GM12878 (cell line): ENCODE measurements at regions of chr9 and their contacts with region 1.

Region 1: GRCh38 chr9:110048403-110048975 is 159.5 kb downstream of the C9orf152 start:
- DNase-seq: peak; percentile 56
- ATAC-seq: peak; percentile 90
- H3K4me3 ChIP-seq: peak overlapping the region; percentile 100
- H3K27ac ChIP-seq: peak overlapping the region; percentile 87
- H3K4me1 ChIP-seq: 0 out of 2 replicates have a peak, but pooled peaks cover 4% of the 10 kb centered on the region
- H3K27me3 ChIP-seq: no peaks in the 10 kb centered on the region; a peak in 1 of 4 replicates
- CTCF ChIP-seq: no peak
- EP300 ChIP-seq: no peak
- POLR2A ChIP-seq: peak; percentile 88
- RAD21 ChIP-seq: no peak

Region 2: GRCh38 chr9:108903420-108904103 is 1144.9 kb before region 1 on chr9:
- CTCF ChIA-PET with region 1: no interaction called
- POLR2A ChIA-PET with region 1: no interaction called
- RAD21 ChIA-PET with region 1: no interaction called
- SMC1A ChIA-PET with region 1: no interaction called
- in situ Hi-C with region 1: no loop called
- intact Hi-C with region 1: no loop called
- DNase-seq: no peak
- ATAC-seq: no peak
- H3K4me3 ChIP-seq: no peak overlapping the region
- H3K27ac ChIP-seq: no peak overlapping the region
- H3K4me1 ChIP-seq: no peaks in the 10 kb centered on the region
- H3K27me3 ChIP-seq: no peaks in the 10 kb centered on the region
- CTCF ChIP-seq: no peak
- EP300 ChIP-seq: no peak
- POLR2A ChIP-seq: no peak
- RAD21 ChIP-seq: no peak

Region 3: DNA sequence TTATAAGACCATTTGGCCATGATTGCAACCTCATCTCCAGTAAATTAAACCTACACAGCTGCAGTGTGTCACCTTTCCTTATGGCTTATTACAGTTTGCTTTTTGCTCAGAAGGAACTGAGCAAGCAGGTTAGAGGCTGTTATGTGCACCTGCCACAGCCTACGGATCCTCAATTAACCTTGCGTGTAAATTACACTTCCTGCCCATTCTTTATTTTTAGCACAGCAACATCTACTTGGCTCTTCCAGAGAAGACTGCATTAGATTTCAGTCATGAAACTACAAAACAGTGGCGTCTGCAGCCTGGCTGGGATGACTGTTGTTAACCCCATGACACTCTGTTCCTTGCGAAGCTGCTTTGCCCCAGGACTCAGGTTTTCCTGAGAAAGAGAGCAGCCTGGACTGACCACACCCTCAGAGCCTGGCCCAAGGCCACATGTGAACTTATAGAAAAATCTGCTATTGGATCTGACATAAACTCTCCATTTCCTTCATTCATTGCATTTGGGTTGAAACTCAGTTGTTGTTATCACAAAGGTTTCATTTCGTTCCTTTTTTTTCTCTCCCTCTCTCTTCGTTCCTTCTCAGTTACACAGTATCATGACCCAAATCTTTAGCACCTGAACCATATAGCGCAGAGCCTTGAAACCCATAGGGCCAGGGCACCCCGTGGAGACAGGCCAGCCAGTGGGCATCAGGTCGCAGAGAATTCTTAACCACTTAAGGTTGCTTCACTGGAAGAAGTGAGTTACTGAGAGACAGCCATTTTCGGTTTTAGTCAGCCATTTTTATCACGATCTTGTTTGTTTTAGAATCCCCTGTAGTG is 129.9 kb before region 1 on chr9:
- CTCF ChIA-PET with region 1: interaction called, 537 read pairs
- POLR2A ChIA-PET with region 1: interaction called, 17 read pairs
- RAD21 ChIA-PET with region 1: interaction called, 5 read pairs
- SMC1A ChIA-PET with region 1: interaction called, 636 read pairs
- in situ Hi-C with region 1: no loop called
- intact Hi-C with region 1: no loop called
- DNase-seq: peak; percentile 80
- ATAC-seq: peak; percentile 73
- H3K4me3 ChIP-seq: peak overlapping the region; percentile 37; the same call in 1 of the 2 replicates
- H3K27ac ChIP-seq: peak overlapping the region; percentile 94
- H3K4me1 ChIP-seq: peaks cover 55% of the 10 kb centered on the region
- H3K27me3 ChIP-seq: no peaks in the 10 kb centered on the region
- CTCF ChIP-seq: no peak
- EP300 ChIP-seq: peak; percentile 71 to 92
- POLR2A ChIP-seq: no peak; the same call in none of the 2 replicates
- RAD21 ChIP-seq: peak; percentile 38; the same call in 1 of the 2 replicates

Region 4: DNA sequence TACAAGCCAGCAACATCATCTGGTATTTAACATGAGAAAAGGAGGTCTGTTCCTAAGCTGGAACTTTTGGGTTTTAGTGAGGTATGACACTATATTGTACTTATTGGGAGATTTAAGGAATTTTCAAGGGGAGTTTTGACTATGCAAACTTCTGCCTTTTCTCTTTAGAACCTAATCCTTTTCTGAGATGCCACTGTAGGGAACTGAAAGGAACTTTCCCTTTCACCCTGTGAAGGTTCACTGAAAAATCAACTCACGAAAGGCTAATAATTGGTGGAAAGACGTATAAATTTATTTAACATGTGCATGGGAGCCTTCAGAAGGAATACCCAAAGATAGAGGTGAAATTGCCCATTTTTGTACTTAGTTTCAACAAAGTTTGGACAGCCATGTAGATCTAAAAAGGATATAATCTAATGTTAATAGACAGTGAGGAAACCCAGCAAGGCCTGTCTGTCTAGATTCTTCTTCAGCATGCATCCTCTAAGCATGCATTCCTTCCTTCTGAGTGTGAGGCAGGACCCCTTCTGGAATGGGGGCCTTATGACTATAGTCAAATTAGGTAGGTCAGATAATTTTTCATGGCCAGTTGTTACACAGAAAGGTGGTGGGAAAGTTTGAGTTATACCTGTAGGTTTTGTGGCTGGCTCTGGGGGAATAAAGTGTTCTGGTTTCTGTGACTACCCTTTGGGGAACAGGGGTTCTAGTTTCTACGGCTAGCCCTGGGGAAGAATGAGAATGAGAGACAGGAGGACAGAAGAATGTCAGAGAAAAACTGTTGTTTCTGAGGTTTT is 40.8 kb before region 1 on chr9:
- CTCF ChIA-PET with region 1: no interaction called
- POLR2A ChIA-PET with region 1: no interaction called
- RAD21 ChIA-PET with region 1: no interaction called
- SMC1A ChIA-PET with region 1: no interaction called
- in situ Hi-C with region 1: no loop called
- intact Hi-C with region 1: loop called (anchors 2 kb)
- DNase-seq: peak; percentile 59
- ATAC-seq: peak; percentile 86
- H3K4me3 ChIP-seq: no peak overlapping the region
- H3K27ac ChIP-seq: peak overlapping the region; percentile 69
- H3K4me1 ChIP-seq: peaks cover 21% of the 10 kb centered on the region
- H3K27me3 ChIP-seq: no peaks in the 10 kb centered on the region
- CTCF ChIP-seq: no peak
- EP300 ChIP-seq: no peak
- POLR2A ChIP-seq: no peak
- RAD21 ChIP-seq: peak; percentile 34; the same call in 1 of the 2 replicates

Region 5: GRCh38 chr9:110069326-110070248 is 21.1 kb after region 1 on chr9:
- CTCF ChIA-PET with region 1: interaction called, 3 read pairs
- POLR2A ChIA-PET with region 1: interaction called, 5 read pairs
- RAD21 ChIA-PET with region 1: interaction called, 11 read pairs
- SMC1A ChIA-PET with region 1: interaction called, 10 read pairs
- in situ Hi-C with region 1: no loop called
- intact Hi-C with region 1: no loop called
- DNase-seq: no peak
- ATAC-seq: no peak
- H3K4me3 ChIP-seq: no peak overlapping the region
- H3K27ac ChIP-seq: no peak overlapping the region
- H3K4me1 ChIP-seq: peaks cover 29% of the 10 kb centered on the region
- H3K27me3 ChIP-seq: no peaks in the 10 kb centered on the region
- CTCF ChIP-seq: no peak
- EP300 ChIP-seq: no peak
- POLR2A ChIP-seq: no peak
- RAD21 ChIP-seq: no peak

Region 6: DNA sequence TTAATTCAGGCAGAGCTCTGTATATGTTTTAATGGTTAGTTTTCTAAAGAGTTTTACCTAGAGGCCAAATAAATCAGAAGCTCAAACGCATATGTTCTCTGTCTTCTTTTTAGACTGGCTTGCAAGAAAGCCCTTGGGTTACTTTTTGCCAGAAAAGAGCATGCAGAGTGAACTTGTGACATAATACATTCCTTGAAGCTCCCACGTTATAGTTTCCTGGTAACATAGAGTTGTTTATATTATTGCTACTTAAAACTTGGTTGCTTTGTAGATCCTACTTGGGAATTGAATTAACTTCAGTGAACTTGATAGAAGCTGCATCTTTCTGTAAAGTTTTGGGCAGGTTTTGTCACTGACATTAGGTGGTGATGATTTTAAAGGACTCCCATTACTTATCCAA is 56.6 kb after region 1 on chr9:
- CTCF ChIA-PET with region 1: interaction called, 5 read pairs
- POLR2A ChIA-PET with region 1: interaction called, 6 read pairs
- RAD21 ChIA-PET with region 1: interaction called, 16 read pairs
- SMC1A ChIA-PET with region 1: interaction called, 10 read pairs
- in situ Hi-C with region 1: no loop called
- intact Hi-C with region 1: loop called (anchors 5 kb)
- DNase-seq: no peak
- ATAC-seq: no peak
- H3K4me3 ChIP-seq: no peak overlapping the region
- H3K27ac ChIP-seq: no peak overlapping the region
- H3K4me1 ChIP-seq: peaks cover 58% of the 10 kb centered on the region
- H3K27me3 ChIP-seq: no peaks in the 10 kb centered on the region
- CTCF ChIP-seq: no peak
- EP300 ChIP-seq: no peak
- POLR2A ChIP-seq: no peak
- RAD21 ChIP-seq: no peak

Region 7: GRCh38 chr9:110125207-110125751 is 76.8 kb after region 1 on chr9:
- CTCF ChIA-PET with region 1: interaction called, 6 read pairs
- POLR2A ChIA-PET with region 1: interaction called, 50 read pairs
- RAD21 ChIA-PET with region 1: interaction called, 49 read pairs
- SMC1A ChIA-PET with region 1: interaction called, 54 read pairs
- in situ Hi-C with region 1: no loop called
- intact Hi-C with region 1: no loop called
- DNase-seq: no peak
- ATAC-seq: no peak
- H3K4me3 ChIP-seq: no peak overlapping the region
- H3K27ac ChIP-seq: peak overlapping the region; percentile 29
- H3K4me1 ChIP-seq: peaks cover 58% of the 10 kb centered on the region
- H3K27me3 ChIP-seq: no peaks in the 10 kb centered on the region
- CTCF ChIP-seq: no peak
- EP300 ChIP-seq: no peak
- POLR2A ChIP-seq: no peak
- RAD21 ChIP-seq: no peak